CD4-positive, alpha-beta memory T cell (primary cell): ENCODE measurements at regions of chr19 and their contacts with region 1.

Region 1: GRCh38 chr19:42132851-42133528 is 744 bp upstream of the POU2F2 start:
- DNase-seq: peak; percentile 79 to 91 (median 84)
- H3K4me3 ChIP-seq: peak overlapping the region; percentile 43 to 97
- H3K4me3 Mint-ChIP-seq: peak overlapping the region; percentile 87 to 96 (median 92)
- H3K27ac ChIP-seq: peak overlapping the region; percentile 74
- H3K27ac Mint-ChIP-seq: peak overlapping the region; percentile 84 to 99 (median 88)
- H3K4me1 ChIP-seq: peaks cover 71% of the 10 kb centered on the region
- H3K4me1 Mint-ChIP-seq: peaks cover 39 to 87% (median 59%) of the 10 kb centered on the region in 4 donors
- H3K27me3 ChIP-seq: no peaks in the 10 kb centered on the region
- H3K27me3 Mint-ChIP-seq: no peaks in the 10 kb centered on the region

Region 2: DNA sequence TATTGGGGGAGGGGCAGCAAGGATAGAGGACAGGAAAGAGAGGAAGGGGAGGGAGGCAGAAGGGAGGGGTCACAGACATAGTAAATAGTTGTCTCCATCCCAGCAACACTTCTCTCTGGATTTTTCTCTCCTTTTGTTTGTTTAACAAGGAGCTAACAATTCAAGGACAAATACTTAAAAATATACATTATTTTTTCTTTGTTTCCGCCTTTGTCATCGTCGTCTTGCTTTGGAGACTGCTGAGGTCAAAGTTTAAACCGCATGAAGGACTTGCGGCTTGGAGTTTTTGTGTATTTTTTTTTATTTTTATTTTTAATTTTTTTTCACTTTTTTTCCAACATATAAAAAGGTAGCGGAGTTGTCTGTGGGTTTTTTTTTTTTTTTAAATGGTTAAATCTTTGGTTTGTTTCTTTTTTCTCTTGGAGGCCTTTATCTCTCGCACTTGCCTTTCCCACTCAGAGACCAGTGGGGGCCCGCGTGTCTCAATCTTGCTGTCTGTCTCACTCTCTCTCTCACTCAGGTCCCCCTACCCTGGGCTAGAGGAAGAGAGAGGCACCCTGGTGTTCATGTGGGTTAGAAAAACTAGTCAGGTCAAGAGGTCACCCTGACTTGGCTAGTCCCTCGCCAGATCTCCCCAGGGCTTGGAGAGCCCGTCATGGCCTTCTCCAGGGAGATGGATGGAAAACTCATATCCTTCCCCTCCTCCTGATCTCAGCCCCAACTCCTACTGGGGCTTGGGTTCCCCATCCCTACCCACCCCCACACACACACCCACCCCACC is 46.0 kb before region 1 on chr19:
- CTCF ChIA-PET with region 1: no interaction called
- POLR2A ChIA-PET with region 1: no interaction called
- intact Hi-C with region 1: no loop called
- DNase-seq: no peak
- H3K4me3 ChIP-seq: no peak overlapping the region
- H3K4me3 Mint-ChIP-seq: no peak overlapping the region
- H3K27ac ChIP-seq: no peak overlapping the region
- H3K27ac Mint-ChIP-seq: peak overlapping the region in 3 of 7 donors; percentile 11 to 81 (median 29)
- H3K4me1 ChIP-seq: peaks cover 8% of the 10 kb centered on the region
- H3K4me1 Mint-ChIP-seq: peaks cover 6 to 34% (median 11%) of the 10 kb centered on the region in 4 donors
- H3K27me3 ChIP-seq: no peaks in the 10 kb centered on the region
- H3K27me3 Mint-ChIP-seq: no peaks in the 10 kb centered on the region

Region 3: DNA sequence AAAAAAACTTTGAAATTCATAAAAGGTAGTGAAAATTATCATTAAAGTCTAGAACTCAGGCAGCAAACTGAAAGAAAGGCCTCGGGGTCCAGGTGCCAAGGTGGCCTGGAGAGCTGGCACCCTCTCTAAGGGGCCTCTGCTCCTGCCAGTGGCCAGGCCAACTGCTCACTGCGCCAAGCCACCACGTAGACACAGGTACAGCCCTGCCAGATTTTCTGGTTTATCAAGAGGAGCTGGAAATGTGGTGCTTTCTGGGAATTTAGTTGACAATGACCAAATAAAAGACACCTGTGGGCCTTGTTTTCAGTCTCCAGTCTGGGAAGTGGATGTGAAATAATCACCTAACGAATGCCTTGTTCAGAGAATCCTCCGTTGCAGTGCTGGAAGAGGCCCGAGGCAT is 34.2 kb before region 1 on chr19:
- CTCF ChIA-PET with region 1: no interaction called
- POLR2A ChIA-PET with region 1: no interaction called
- intact Hi-C with region 1: no loop called
- DNase-seq: no peak
- H3K4me3 ChIP-seq: no peak overlapping the region
- H3K4me3 Mint-ChIP-seq: no peak overlapping the region
- H3K27ac ChIP-seq: no peak overlapping the region
- H3K27ac Mint-ChIP-seq: peak overlapping the region in 1 of 7 donors; percentile 17
- H3K4me1 ChIP-seq: no peaks in the 10 kb centered on the region
- H3K4me1 Mint-ChIP-seq: peaks cover 0 to 7% (median under 1%) of the 10 kb centered on the region in 4 donors
- H3K27me3 ChIP-seq: no peaks in the 10 kb centered on the region
- H3K27me3 Mint-ChIP-seq: no peaks in the 10 kb centered on the region

Region 4: DNA sequence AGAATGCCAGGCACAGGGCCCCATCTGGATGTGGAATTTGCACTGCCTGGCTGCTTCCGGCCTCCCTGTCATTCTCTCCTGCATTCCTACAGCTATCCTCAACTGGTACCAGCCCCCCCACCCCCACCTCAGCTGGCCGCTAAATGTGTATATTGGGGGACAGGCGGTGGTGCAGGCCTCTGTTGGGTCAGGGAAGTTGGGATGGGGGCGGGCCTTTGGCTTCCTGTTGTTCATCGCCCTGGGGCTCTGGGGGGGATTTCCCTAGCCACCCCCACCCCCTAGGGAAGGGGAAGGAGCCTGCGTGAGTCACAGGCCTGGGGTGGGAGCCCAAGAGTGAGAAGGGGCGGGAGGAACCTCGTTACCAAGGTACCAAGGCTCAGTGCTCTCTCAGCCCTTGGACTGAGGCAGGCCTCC is 11.3 kb before region 1 on chr19:
- CTCF ChIA-PET with region 1: interaction called, 23 read pairs
- POLR2A ChIA-PET with region 1: interaction called, 58 read pairs
- intact Hi-C with region 1: loop called (anchors 1 kb)
- DNase-seq: peak; percentile 50 to 91 (median 52)
- H3K4me3 ChIP-seq: peak overlapping the region in 1 of 2 donors; percentile 41
- H3K4me3 Mint-ChIP-seq: peak overlapping the region; percentile 55 to 89 (median 75)
- H3K27ac ChIP-seq: peak overlapping the region; percentile 83
- H3K27ac Mint-ChIP-seq: peak overlapping the region; percentile 88 to 99 (median 96)
- H3K4me1 ChIP-seq: peaks cover 52% of the 10 kb centered on the region
- H3K4me1 Mint-ChIP-seq: peaks cover 38 to 66% (median 51%) of the 10 kb centered on the region in 4 donors
- H3K27me3 ChIP-seq: no peaks in the 10 kb centered on the region
- H3K27me3 Mint-ChIP-seq: no peaks in the 10 kb centered on the region

Region 5: GRCh38 chr19:42184401-42184861 is 51.4 kb after region 1 on chr19:
- CTCF ChIA-PET with region 1: interaction called, 33 read pairs
- POLR2A ChIA-PET with region 1: interaction called, 23 read pairs
- intact Hi-C with region 1: loop called (anchors 1 kb)
- DNase-seq: peak; percentile 44 to 63 (median 58)
- H3K4me3 ChIP-seq: no peak overlapping the region
- H3K4me3 Mint-ChIP-seq: peak overlapping the region in 6 of 8 donors; percentile 0 to 79 (median 36)
- H3K27ac ChIP-seq: peak overlapping the region; percentile 10
- H3K27ac Mint-ChIP-seq: peak overlapping the region; percentile 40 to 94 (median 79)
- H3K4me1 ChIP-seq: peaks cover 44% of the 10 kb centered on the region
- H3K4me1 Mint-ChIP-seq: peaks cover 38 to 67% (median 55%) of the 10 kb centered on the region in 4 donors
- H3K27me3 ChIP-seq: no peaks in the 10 kb centered on the region
- H3K27me3 Mint-ChIP-seq: no peaks in the 10 kb centered on the region

Region 6: GRCh38 chr19:42244347-42245220 is 111.6 kb after region 1 on chr19:
- CTCF ChIA-PET with region 1: interaction called, 46 read pairs
- POLR2A ChIA-PET with region 1: interaction called, 33 read pairs
- intact Hi-C with region 1: loop called (anchors 1 kb)
- DNase-seq: peak; percentile 89 to 95 (median 91)
- H3K4me3 ChIP-seq: peak overlapping the region; percentile 53 to 89
- H3K4me3 Mint-ChIP-seq: peak overlapping the region; percentile 94 to 99 (median 97)
- H3K27ac ChIP-seq: peak overlapping the region; percentile 89
- H3K27ac Mint-ChIP-seq: peak overlapping the region; percentile 77 to 99 (median 99)
- H3K4me1 ChIP-seq: peaks cover 47% of the 10 kb centered on the region
- H3K4me1 Mint-ChIP-seq: peaks cover 26 to 62% (median 44%) of the 10 kb centered on the region in 4 donors
- H3K27me3 ChIP-seq: no peaks in the 10 kb centered on the region
- H3K27me3 Mint-ChIP-seq: no peaks in the 10 kb centered on the region

Region 7: DNA sequence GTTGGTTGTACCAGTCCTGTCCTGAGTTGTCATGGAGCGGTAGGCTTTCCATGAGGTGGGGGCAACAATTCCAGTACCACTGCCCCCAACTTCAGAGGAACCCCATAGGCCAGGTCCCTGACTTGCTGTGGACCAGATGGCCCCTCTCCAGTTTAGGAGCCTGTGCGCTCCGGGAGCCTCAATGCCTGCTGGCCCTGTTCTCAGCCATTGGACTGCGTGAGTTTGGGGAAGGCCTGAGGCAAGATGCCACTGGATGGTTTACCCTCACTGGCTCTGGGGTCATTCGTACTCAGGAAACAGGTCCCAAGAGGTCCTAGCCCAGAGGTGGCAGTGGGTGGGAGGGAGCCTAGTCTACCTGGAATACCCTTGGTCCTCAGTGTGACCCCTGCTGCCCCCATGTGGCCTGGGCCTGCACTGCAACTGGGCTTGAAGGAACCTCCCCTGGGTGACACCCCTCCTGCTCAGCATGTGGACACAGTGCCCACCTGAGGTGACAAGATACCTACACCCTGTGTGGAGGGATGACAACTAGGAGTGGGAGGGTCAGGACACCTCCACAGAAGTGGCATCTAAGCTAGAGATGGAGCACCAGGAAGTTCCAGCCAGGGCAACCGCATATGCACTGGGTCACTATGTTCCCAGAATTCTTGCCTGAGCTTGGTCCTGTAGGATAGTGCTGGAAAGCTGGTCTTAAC is 163.0 kb after region 1 on chr19:
- CTCF ChIA-PET with region 1: interaction called, 26 read pairs
- POLR2A ChIA-PET with region 1: interaction called, 5 read pairs
- intact Hi-C with region 1: loop called (anchors 1 kb)
- DNase-seq: peak; percentile 78 to 89 (median 85)
- H3K4me3 ChIP-seq: no peak overlapping the region
- H3K4me3 Mint-ChIP-seq: peak overlapping the region in 1 of 8 donors; percentile 25
- H3K27ac ChIP-seq: peak overlapping the region; percentile 11
- H3K27ac Mint-ChIP-seq: peak overlapping the region in 6 of 7 donors; percentile 17 to 79 (median 73)
- H3K4me1 ChIP-seq: peaks cover 8% of the 10 kb centered on the region
- H3K4me1 Mint-ChIP-seq: peaks cover 3 to 22% (median 12%) of the 10 kb centered on the region in 4 donors
- H3K27me3 ChIP-seq: no peaks in the 10 kb centered on the region
- H3K27me3 Mint-ChIP-seq: no peaks in the 10 kb centered on the region

Region 8: GRCh38 chr19:42423462-42424344 is 290.7 kb after region 1 on chr19:
- CTCF ChIA-PET with region 1: no interaction called
- POLR2A ChIA-PET with region 1: interaction called, 3 read pairs
- intact Hi-C with region 1: loop called (anchors 5 kb)
- DNase-seq: peak; percentile 93 to 95 (median 94)
- H3K4me3 ChIP-seq: peak overlapping the region; percentile 86 to 97
- H3K4me3 Mint-ChIP-seq: peak overlapping the region; percentile 91 to 99 (median 98)
- H3K27ac ChIP-seq: peak overlapping the region; percentile 61
- H3K27ac Mint-ChIP-seq: peak overlapping the region; percentile 88 to 98 (median 95)
- H3K4me1 ChIP-seq: peaks cover 39% of the 10 kb centered on the region
- H3K4me1 Mint-ChIP-seq: peaks cover 28 to 48% (median 37%) of the 10 kb centered on the region in 4 donors
- H3K27me3 ChIP-seq: no peaks in the 10 kb centered on the region
- H3K27me3 Mint-ChIP-seq: no peaks in the 10 kb centered on the region